ENCODE measurements at regions of chr1 and their contacts with region 1.

Region 1: DNA sequence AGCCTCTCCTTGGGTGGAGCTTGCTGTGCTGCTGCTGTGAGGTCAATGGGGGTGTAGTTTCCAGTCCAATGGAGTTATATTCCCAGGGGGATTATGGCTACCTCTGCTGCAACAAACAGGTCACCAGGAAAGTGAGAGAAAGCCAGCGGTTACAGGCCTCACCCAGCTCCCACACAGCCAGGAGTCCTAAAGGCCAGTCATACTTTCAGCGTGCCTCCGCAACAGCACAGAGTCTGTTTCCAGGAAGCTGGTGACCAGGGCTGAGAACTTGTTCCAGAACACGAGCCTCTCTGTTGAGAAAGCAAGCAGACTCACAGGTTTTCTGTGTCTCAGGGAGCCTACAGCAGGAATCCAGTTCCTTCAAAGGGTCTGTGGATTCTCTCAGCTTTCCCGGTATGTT is 17.3 kb upstream of the OR2M5 start:
- DNase-seq: no peak
- H3K4me3 ChIP-seq: no peak overlapping the region
- H3K27ac ChIP-seq: no peak overlapping the region
- H3K4me1 ChIP-seq: no peaks in the 10 kb centered on the region
- H3K27me3 ChIP-seq: no peaks in the 10 kb centered on the region
- CTCF ChIP-seq: no peak

Region 2: DNA sequence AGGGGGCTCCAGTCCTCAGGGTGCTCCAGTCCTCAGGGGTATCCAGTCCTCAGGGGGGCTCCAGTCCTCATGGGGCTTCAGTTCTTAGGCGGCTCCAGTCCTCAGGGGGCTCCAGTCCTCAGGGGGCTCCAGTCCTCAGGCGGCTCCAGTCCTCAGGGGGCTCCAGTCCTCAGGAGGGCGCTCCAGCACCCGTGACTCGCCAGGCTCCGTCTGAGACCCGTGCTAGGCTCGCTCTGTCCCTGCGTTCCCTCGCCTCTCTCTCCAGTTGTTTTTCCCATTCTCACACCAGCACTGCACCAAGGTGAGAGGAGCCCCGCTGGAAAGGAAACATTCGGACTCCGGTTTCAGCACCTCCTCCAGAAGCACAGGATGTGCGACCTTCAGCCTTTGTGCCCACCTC is 37.5 kb after region 1 on chr1:
- CTCF ChIA-PET with region 1: no interaction called
- dilution Hi-C with region 1: no loop called
- in situ Hi-C with region 1: no loop called
- intact Hi-C with region 1: no loop called
- DNase-seq: no peak
- H3K4me3 ChIP-seq: no peak overlapping the region
- H3K27ac ChIP-seq: no peak overlapping the region
- H3K4me1 ChIP-seq: no peaks in the 10 kb centered on the region
- H3K27me3 ChIP-seq: no peaks in the 10 kb centered on the region
- CTCF ChIP-seq: no peak

Region 3: GRCh38 chr1:248189026-248189425 is 61.4 kb after region 1 on chr1:
- CTCF ChIA-PET with region 1: no interaction called
- dilution Hi-C with region 1: loop called (anchors 10 kb)
- in situ Hi-C with region 1: no loop called
- intact Hi-C with region 1: no loop called
- DNase-seq: no peak
- H3K4me3 ChIP-seq: no peak overlapping the region
- H3K27ac ChIP-seq: no peak overlapping the region
- H3K4me1 ChIP-seq: no peaks in the 10 kb centered on the region
- H3K27me3 ChIP-seq: no peaks in the 10 kb centered on the region
- CTCF ChIP-seq: no peak

Region 4: DNA sequence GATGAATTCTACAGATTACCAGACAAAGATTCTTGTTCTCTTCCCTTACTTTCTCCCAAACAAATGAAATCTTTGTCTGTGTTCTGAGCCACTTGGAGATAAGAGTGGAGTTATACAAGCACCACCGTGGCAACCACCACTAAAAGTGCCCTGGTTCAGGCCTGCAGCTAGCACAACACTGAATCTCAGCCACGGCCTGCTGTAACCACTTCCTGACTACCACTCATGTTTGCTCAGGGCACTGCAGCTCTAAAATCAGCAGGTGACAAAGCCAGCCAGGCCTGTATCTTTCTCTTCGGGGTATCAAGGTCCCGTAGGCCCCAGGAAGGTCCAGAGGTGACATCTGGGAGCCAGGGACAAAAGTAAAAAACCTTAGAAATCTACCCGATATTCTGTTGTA is 244.7 kb after region 1 on chr1:
- CTCF ChIA-PET with region 1: no interaction called
- dilution Hi-C with region 1: no loop called
- in situ Hi-C with region 1: no loop called
- intact Hi-C with region 1: no loop called
- DNase-seq: no peak
- H3K4me3 ChIP-seq: no peak overlapping the region
- H3K27ac ChIP-seq: no peak overlapping the region
- H3K4me1 ChIP-seq: no peaks in the 10 kb centered on the region
- H3K27me3 ChIP-seq: no peaks in the 10 kb centered on the region
- CTCF ChIP-seq: no peak

Measured in mammary epithelial cell (primary cell).